Caco-2 (cell line): ENCODE measurements at regions of chr14 and their contacts with region 1.

Region 1: DNA sequence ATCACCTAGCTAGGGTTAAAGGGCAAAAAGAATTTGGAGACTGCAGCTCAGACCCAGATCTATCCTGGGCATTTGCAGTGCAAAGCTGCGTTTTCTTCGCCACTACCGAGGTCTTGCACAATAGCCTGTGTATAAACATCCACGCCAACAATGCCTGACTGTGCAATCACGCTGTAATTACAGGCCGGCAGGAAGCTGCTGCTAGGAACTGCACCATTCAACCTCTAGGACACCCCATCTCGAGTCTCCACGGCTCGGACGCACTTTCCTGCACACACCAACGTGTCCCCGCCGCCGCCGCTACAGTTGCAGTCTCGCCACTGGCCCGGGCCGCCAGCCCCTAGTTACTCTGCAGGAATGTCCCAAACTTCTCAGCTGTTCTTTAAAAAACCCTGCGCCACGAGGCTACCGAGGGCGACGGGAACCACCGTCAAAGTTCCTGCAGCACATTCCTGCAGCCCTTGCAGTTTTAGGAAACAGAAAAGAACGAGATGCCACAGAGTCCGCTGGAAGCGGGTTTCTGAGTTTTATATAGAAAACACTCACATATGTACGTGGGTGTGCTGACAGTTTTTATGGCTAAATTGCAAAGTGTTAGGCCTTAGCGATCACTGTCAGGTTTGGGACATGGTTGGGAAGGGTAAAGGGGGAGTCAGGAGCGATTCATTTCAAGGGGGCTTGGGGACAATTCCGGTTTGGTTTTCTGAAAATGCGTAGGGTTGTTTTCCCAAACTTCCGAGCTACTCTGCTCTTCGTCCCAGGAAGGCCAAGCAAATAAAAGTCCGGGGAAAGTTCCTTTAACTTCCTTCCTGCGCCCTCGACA is 65.5 kb upstream of the PTGR2 start:
- DNase-seq: peak; percentile 84 to 88
- H3K4me3 ChIP-seq: peak overlapping the region; percentile 64
- H3K4me3 Mint-ChIP-seq: peak overlapping the region; percentile 92
- H3K27ac Mint-ChIP-seq: peak overlapping the region; percentile 77
- H3K4me1 ChIP-seq: peaks cover 57% of the 10 kb centered on the region
- H3K4me1 Mint-ChIP-seq: peaks cover 47% of the 10 kb centered on the region
- H3K27me3 ChIP-seq: no peaks in the 10 kb centered on the region
- H3K27me3 Mint-ChIP-seq: no peaks in the 10 kb centered on the region
- CTCF ChIP-seq: peak in 1 of 2 experiments; percentile 20

Region 2: DNA sequence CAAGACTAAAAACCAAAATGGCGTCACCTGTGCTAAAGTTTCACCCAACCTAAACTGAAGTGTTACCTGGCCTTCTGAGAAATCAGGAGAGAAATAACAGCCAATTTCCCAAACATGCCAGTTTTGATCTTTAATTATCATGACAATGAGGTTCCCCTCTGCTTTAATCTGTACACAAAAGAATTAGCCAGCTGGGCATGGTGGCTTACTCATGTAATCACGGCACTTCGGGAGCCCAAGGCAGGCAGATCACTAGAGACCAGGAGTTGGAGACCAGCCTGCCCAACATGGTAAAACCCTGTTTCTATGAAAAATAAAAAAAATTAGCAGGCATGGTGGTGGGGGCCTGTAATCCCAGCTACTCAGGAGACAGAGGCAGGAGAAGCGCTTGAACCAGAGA is 232.2 kb before region 1 on chr14:
- CTCF ChIA-PET with region 1: no interaction called
- POLR2A ChIA-PET with region 1: no interaction called
- intact Hi-C with region 1: no loop called
- DNase-seq: no peak
- H3K4me3 ChIP-seq: no peak overlapping the region
- H3K4me3 Mint-ChIP-seq: no peak overlapping the region
- H3K27ac Mint-ChIP-seq: no peak overlapping the region
- H3K4me1 ChIP-seq: no peaks in the 10 kb centered on the region
- H3K4me1 Mint-ChIP-seq: no peaks in the 10 kb centered on the region
- H3K27me3 ChIP-seq: no peaks in the 10 kb centered on the region
- H3K27me3 Mint-ChIP-seq: no peaks in the 10 kb centered on the region
- CTCF ChIP-seq: no peak

Region 3: GRCh38 chr14:73771848-73772638 is 14.0 kb before region 1 on chr14:
- CTCF ChIA-PET with region 1: interaction called, 5 read pairs
- POLR2A ChIA-PET with region 1: interaction called, 10 read pairs
- intact Hi-C with region 1: loop called (anchors 1 kb)
- DNase-seq: peak; percentile 91 to 94
- H3K4me3 ChIP-seq: no peak overlapping the region
- H3K4me3 Mint-ChIP-seq: peak overlapping the region; percentile 44
- H3K27ac Mint-ChIP-seq: peak overlapping the region; percentile 51
- H3K4me1 ChIP-seq: peaks cover 31% of the 10 kb centered on the region
- H3K4me1 Mint-ChIP-seq: peaks cover 50% of the 10 kb centered on the region
- H3K27me3 ChIP-seq: no peaks in the 10 kb centered on the region
- H3K27me3 Mint-ChIP-seq: no peaks in the 10 kb centered on the region
- CTCF ChIP-seq: no peak

Region 4: DNA sequence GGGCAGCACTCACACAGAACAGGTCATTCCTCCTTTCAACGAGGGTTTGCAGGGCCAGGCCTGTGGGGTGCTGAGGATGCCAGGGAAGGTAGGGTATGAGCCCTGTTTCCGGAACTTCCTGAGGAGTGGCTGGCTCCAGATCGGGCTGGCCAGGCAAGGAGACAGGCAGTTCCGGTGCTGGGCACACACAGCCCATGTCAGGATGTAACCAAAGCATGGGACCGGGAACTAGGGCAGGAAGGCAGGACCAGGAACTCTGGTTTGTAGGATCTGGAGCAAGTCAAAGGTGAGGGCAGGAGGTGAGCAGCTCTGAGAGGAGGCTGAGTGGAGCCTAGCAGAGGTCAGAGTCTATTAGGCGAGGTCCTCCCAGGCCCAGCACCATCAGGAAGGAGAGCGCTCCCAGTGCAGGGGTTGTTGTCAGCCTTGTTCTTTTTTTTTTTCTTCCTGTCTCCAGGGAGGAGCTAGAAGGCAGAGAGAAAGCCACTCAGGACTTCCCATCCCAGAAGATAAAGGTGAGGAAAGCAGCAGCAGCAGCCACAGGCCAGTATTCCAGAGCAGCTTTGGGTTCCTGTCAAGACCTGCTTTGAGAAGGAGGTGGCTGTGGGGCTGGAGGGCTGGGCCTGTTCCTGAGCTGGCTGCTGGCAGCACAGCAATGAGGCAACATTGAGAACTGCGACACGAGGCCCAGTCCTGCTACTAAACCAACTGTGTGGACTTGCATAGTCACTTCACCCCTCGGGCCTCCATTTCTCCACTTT is 16.5 kb after region 1 on chr14:
- CTCF ChIA-PET with region 1: interaction called, 5 read pairs
- POLR2A ChIA-PET with region 1: interaction called, 3 read pairs
- intact Hi-C with region 1: loop called (anchors 2 kb)
- DNase-seq: peak; percentile 64 to 79
- H3K4me3 ChIP-seq: no peak overlapping the region
- H3K4me3 Mint-ChIP-seq: no peak overlapping the region
- H3K27ac Mint-ChIP-seq: peak overlapping the region; percentile 68
- H3K4me1 ChIP-seq: peaks cover 36% of the 10 kb centered on the region
- H3K4me1 Mint-ChIP-seq: peaks cover 14% of the 10 kb centered on the region
- H3K27me3 ChIP-seq: no peaks in the 10 kb centered on the region
- H3K27me3 Mint-ChIP-seq: no peaks in the 10 kb centered on the region
- CTCF ChIP-seq: no peak

Region 5: DNA sequence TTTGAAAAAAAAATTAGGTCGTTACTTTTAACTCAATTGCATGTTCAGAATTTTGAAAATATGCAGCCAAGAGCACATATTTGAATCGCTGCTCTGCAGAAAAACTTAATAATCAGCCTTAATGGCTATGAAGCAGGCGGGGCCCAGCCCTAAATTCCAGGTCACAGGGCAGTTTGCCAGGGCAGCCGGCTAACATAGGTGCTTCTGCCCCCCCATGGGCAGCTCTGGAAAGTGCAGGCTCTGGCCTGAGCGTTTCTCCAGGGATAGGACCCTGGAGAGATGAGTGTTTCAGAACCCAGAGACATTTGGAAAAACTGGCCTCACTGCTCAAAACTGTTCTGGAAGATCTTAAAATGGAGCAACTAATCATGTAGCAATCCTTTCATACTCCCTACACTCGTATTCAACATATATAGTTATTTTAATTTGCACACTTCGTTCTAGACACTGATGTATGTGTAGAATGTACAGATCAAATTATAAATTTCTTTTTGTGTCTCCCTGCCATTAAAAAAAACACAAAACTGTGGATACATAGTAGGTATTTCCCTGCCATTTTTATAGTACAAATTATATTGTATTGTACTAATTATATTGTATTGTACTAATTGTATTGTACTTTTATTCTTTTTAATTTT is 39.6 kb after region 1 on chr14:
- CTCF ChIA-PET with region 1: interaction called, 3 read pairs
- POLR2A ChIA-PET with region 1: interaction called, 3 read pairs
- intact Hi-C with region 1: loop called (anchors 5 kb)
- DNase-seq: peak; percentile 79 to 86
- H3K4me3 ChIP-seq: no peak overlapping the region
- H3K4me3 Mint-ChIP-seq: no peak overlapping the region
- H3K27ac Mint-ChIP-seq: no peak overlapping the region
- H3K4me1 ChIP-seq: peaks cover 4% of the 10 kb centered on the region; the same call in 1 of the 2 replicates
- H3K4me1 Mint-ChIP-seq: peaks cover 8% of the 10 kb centered on the region
- H3K27me3 ChIP-seq: no peaks in the 10 kb centered on the region
- H3K27me3 Mint-ChIP-seq: no peaks in the 10 kb centered on the region
- CTCF ChIP-seq: peak; percentile 89 to 93

Region 6: DNA sequence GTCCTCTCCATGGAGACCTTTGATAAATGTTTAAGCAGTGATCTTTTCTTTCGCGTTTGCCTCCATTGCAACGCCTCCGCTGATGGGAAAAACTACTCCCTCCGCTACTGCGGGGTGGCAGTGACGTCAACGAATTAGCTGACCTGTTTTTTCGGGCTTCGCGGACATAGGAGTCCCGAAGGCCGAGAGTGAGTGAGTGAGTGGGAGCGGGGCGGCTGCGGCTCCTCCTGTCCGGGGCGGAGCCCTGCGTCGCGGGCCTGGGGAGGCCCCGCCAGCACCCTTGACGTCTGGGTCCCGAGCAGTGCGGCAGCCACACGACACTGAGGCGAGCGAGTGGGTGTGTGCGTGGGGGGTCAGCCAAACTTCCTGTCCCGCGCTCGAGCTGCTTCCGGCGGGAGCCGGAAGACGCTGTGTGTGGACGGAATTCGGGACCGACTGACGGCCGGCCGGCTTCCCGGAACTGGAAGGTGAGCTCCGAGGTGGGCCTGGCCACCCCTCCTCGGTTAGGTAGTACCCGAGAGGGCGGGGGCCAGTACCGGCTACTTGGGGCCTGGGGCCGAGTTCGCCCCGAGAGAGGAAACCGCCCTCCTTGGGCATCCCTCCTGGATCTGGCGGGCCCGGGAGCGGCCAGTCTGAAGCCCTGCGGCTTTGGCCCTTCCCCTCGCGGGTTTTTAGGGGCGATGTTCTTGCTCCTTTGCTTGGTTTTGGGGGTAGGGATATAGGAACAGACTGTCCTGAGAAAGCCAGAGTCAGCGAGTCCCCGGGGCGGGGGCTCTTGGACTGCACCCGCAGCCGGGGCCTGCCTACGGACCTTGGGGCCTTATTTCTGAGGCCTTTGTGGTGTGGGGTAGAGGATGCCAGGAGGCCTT is 100.6 kb after region 1 on chr14 and contains the start of gene ZNF410:
- CTCF ChIA-PET with region 1: no interaction called
- POLR2A ChIA-PET with region 1: interaction called, 23 read pairs
- intact Hi-C with region 1: no loop called
- DNase-seq: peak; percentile 94 to 95
- H3K4me3 ChIP-seq: peak within 1 kb of the TSS; percentile 69
- H3K4me3 Mint-ChIP-seq: peak within 1 kb of the TSS; percentile 96
- H3K27ac Mint-ChIP-seq: peak within 1 kb of the TSS; percentile 98
- H3K4me1 ChIP-seq: peaks cover 17% of the 10 kb centered on the region
- H3K4me1 Mint-ChIP-seq: peaks cover 26% of the 10 kb centered on the region
- H3K27me3 ChIP-seq: no peaks in the 10 kb centered on the region
- H3K27me3 Mint-ChIP-seq: no peaks in the 10 kb centered on the region
- CTCF ChIP-seq: no peak
- total RNA-seq, gene ZNF410: 35.9 and 36.8 TPM in 2 replicates